ENCODE measurements at regions of chr19 and their contacts with region 1.

Region 1: DNA sequence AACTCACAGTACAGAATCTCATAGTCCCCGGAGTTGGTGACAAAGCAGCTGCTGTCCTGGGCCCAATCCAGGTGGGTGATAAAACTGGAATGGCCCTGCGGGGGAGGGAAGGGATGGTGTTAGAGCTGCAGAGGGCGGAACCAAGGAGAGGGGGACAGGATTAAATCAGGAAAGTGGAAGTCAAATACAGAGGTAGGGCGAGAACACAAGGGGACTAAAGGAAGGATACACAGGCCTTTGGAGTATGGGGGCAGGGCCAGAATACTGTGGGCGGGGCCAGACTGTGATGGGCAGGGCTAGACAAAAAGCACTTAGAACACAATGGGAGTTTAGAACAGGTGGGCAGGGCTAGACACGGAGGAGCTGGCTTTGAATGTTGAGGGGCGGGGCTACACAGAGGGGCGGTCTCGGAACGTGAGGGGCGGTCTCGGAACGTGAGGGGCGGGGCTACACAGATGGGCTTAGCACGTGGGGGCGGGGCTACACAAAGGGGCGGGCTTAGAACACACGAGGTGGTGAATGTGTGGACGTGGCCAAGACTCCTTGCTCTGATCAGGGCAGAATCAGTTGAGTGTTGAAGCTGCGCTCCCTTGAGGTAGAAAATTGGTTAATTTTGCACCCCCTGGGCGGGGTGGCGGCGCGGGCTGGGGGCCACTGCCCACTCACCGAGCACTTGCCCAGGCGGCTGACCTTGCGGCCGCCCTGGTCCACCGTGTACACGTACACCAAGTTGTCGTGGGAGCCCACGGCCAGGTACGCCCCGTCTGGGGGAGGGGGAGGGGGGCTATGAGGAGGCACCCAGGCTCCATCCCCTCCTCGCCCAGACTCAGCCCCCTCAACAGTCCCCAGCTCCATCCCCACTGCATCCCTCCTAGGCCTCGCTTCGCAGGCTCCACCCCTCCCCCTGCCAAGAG is 14.0 kb upstream of the GPR4 start:
- DNase-seq: peak; percentile 98 to 99
- H3K4me3 ChIP-seq: peak overlapping the region; percentile 80 to 89 (median 86)
- H3K27ac ChIP-seq: peak overlapping the region; percentile 86
- H3K4me1 ChIP-seq: peaks cover 0 to 6% (median 2%) of the 10 kb centered on the region in 4 experiments; a peak in 5 of 7 replicates
- H3K27me3 ChIP-seq: no peaks in the 10 kb centered on the region
- CTCF ChIP-seq: no peak
- EP300 ChIP-seq: no peak
- POLR2A ChIP-seq: peak; percentile 69 to 92
- RAD21 ChIP-seq: no peak

Region 2: DNA sequence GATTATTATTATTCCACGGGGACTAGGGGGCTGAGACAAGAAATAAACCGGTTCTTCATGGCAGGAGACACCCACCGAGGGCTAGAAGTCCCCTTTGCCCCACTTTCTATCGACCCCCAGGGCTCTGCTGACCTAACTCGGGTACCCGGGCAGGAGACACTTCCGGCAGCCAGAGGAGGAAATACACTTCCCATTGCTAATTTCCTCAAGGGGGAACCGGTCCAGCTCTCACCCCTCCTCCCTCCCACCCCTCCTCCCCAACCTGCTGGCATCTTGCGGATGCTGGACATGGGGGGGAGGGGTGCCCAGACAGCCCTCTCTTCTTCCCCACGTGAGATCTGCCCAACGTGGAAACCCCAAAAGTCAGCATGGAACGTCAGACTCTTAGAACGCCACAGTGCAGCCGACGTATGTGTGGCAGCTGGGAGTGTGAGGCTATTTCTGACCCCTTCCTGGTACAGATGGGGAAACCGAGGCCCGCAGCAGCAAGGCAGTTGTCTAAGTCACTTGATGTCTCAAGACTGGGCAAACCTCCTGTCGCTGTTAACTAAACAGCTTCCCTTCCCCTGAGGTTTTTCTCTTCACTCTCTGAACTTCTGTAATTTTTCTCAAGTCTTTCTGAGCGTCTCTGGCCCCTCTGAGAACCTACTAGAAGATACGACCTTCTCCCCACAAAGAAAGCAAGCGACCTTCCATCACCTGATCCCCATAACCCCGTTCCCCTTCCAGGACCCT is 17.6 kb before region 1 on chr19:
- CTCF ChIA-PET with region 1: interaction called, 5 read pairs
- POLR2A ChIA-PET with region 1: interaction called, 10 read pairs
- DNase-seq: no peak
- H3K4me3 ChIP-seq: peak overlapping the region; percentile 14 to 58 (median 30); a peak in 6 of 8 replicates
- H3K27ac ChIP-seq: no peak overlapping the region
- H3K4me1 ChIP-seq: peaks cover 12 to 25% (median 13%) of the 10 kb centered on the region in 4 experiments; a peak in 6 of 7 replicates
- H3K27me3 ChIP-seq: peaks cover 36 to 56% (median 49%) of the 10 kb centered on the region in 4 experiments
- CTCF ChIP-seq: no peak
- EP300 ChIP-seq: no peak
- POLR2A ChIP-seq: no peak
- RAD21 ChIP-seq: no peak

Region 3: DNA sequence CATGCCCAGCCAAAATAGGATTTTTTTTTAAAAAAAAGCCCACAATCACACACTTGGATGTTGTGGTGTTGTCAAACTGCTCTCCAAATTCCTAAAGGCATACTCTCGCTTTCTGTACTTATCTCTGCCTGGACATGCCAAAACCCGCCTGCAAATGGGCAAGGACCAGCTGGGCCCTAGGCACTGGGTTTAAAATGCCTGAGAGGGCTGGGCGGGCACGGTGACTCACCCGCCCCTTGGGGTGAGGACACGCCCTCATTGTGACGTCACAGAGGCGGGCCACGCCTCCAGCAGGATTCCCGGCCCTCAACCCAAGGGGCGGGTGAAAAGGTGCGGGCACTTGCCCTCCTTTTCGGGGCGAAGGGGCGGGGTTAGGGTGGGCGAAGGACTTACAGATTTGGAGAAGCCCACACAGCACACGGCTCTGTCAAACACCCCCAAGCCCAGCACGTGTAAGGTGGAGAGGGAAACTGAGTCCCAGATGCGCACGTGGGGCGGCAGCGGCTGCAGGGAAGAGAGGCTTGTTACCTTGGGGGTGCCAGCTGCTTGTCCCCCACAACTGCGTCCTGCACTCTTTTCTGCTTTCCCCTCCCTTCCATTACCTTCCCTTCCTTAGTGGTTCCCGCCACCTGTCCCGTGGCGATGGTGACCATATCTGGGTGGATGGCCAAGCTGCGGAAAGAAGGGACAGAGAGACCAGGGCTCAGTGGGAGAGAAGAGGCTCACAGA is 16.6 kb after region 1 on chr19:
- CTCF ChIA-PET with region 1: interaction called, 135 read pairs
- POLR2A ChIA-PET with region 1: interaction called, 119 read pairs
- DNase-seq: peak in 1 of 2 experiments; percentile 99
- H3K4me3 ChIP-seq: peak overlapping the region; percentile 22 to 50 (median 36); a peak in 7 of 8 replicates
- H3K27ac ChIP-seq: 0 out of 2 replicates have a peak overlapping the region, but pooled peaks have one; percentile 1
- H3K4me1 ChIP-seq: peaks cover 0 to 8% (median 7%) of the 10 kb centered on the region in 4 experiments; a peak in 5 of 7 replicates
- H3K27me3 ChIP-seq: no peaks in the 10 kb centered on the region
- CTCF ChIP-seq: no peak
- EP300 ChIP-seq: no peak
- POLR2A ChIP-seq: no peak; a peak in 1 of 3 replicates
- RAD21 ChIP-seq: no peak